GM10248 (cell line): ENCODE measurements at regions of chr13 and their contacts with region 1.

Region 1: GRCh38 chr13:33723772-33724435 is 94.0 kb upstream of the RFC3 start:
- DNase-seq: peak; percentile 56
- CTCF ChIP-seq: peak; percentile 76

Region 2: DNA sequence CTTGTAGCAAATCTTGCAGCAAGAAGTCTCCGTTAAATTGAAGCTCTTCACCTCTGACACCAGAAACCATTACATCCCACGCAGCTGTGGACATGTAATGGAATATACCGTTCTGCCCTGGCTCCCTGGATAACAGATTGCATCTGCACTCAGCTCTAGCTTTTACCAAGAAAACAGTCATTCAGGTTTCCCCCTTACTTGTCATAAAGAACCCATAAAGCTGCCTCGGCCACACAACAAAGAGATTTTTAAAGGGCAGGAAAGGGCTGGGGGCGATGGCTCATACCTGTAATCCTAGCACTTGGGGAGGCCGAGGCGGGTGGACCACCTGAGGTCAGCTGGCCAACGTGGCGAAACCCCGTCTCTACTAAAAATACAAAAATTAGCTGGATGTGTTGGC is 33.5 kb before region 1 on chr13:
- CTCF ChIA-PET with region 1: interaction called, 13 read pairs
- POLR2A ChIA-PET with region 1: no interaction called
- DNase-seq: no peak
- CTCF ChIP-seq: no peak

Region 3: DNA sequence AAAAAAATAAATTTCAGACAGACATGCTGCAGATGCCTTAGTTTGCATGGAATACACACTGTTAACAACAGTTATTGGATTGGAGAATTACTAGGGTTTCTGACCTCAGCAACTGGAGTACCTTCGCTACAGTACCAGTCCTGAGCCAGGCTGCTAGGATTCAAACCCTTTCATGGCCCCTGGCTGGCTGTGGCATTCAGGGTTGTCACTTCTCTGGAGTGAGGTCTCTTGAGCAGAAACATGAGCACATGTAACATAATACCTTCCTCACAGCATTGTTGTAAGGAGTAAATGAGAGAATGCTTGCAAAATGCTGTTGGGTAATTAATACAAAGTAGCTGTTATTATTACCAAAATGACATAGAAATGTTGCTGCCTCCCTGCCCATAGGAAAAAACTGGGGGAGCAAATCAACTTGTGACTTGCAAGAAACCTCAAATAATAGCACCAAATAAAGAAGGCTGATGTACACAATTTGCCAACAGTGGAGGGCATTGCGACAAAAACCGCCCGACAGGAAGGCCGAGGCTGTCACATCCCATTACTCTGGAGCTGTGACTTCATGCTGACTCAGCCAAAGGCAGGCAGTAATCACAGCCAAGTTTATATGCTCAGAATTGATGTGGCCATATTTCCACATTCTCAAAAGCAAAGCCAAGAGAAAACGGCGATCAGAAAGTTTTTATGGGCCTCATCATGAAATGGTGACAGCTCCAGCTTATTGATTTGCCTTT is 194.5 kb after region 1 on chr13:
- CTCF ChIA-PET with region 1: no interaction called
- POLR2A ChIA-PET with region 1: no interaction called
- DNase-seq: no peak
- CTCF ChIP-seq: no peak